Activated T-helper 2 cell treated with anti-CD3 and anti-CD28 coated beads, Interferon-gamma antibody, Interleukin-2, Interleukin-4, amounts not matched to agents 10 μg/mL and 5 μg/mL and 100 μg/mL, durations not matched to agents 14 hours and 24 hours and 36 hours (primary cell): ENCODE measurements at regions of chr11 and their contacts with region 1.

Region 1: GRCh38 chr11:129418039-129418438 is 42.4 kb downstream of the BARX2 start:
- DNase-seq: no peak
- H3K4me3 Mint-ChIP-seq: no peak overlapping the region
- H3K27ac Mint-ChIP-seq: peak overlapping the region; percentile 54
- H3K4me1 Mint-ChIP-seq: peaks cover 23% of the 10 kb centered on the region
- H3K27me3 Mint-ChIP-seq: no peaks in the 10 kb centered on the region

Region 2: GRCh38 chr11:129352676-129353075 is 65.4 kb before region 1 on chr11:
- intact Hi-C with region 1: no loop called
- DNase-seq: no peak
- H3K4me3 Mint-ChIP-seq: no peak overlapping the region
- H3K27ac Mint-ChIP-seq: no peak overlapping the region
- H3K4me1 Mint-ChIP-seq: no peaks in the 10 kb centered on the region
- H3K27me3 Mint-ChIP-seq: peaks cover 7% of the 10 kb centered on the region

Region 3: DNA sequence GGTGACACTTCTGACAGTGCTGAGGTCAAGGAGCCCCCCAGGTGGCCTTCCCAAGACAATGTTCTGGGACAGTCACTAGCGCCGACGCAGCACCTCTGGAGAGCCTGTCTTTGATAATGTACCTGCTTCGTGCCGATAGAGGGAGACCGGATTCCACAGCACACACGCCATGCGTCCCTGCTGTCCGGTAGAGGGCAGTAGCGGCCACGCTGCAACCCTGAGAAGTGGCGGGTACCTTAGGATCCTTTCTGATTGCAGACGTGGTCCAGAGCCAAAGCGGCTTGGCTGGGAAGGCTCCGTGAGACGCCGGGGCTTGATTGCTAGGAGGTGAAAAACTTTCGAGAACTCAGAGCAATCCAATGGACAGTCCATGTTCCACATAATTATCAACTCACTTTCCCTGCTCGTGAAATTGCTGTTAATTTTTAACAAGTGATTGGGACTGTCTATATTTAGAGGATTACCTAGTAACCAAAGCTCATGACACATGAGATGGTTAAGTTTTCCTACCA is 53.8 kb before region 1 on chr11:
- intact Hi-C with region 1: no loop called
- DNase-seq: peak; percentile 74
- H3K4me3 Mint-ChIP-seq: no peak overlapping the region
- H3K27ac Mint-ChIP-seq: no peak overlapping the region
- H3K4me1 Mint-ChIP-seq: peaks cover 5% of the 10 kb centered on the region
- H3K27me3 Mint-ChIP-seq: peaks cover 46% of the 10 kb centered on the region

Region 4: GRCh38 chr11:129447654-129448239 is 29.7 kb after region 1 on chr11:
- intact Hi-C with region 1: loop called (anchors 1 kb)
- DNase-seq: no peak
- H3K4me3 Mint-ChIP-seq: no peak overlapping the region
- H3K27ac Mint-ChIP-seq: peak overlapping the region; percentile 88
- H3K4me1 Mint-ChIP-seq: peaks cover 27% of the 10 kb centered on the region
- H3K27me3 Mint-ChIP-seq: no peaks in the 10 kb centered on the region

Region 5: GRCh38 chr11:129644326-129644725 is 226.3 kb after region 1 on chr11:
- intact Hi-C with region 1: loop called (anchors 2 kb)
- DNase-seq: no peak
- H3K4me3 Mint-ChIP-seq: no peak overlapping the region
- H3K27ac Mint-ChIP-seq: peak overlapping the region; percentile 98
- H3K4me1 Mint-ChIP-seq: peaks cover 83% of the 10 kb centered on the region
- H3K27me3 Mint-ChIP-seq: no peaks in the 10 kb centered on the region